IMR-90 (cell line): ENCODE measurements at regions of chr5 and their contacts with region 1.

Region 1: GRCh38 chr5:134527146-134527960 is 1.9 kb downstream of the JADE2 start:
- DNase-seq: peak; percentile 90
- ATAC-seq: peak; percentile 73
- H3K4me3 ChIP-seq: peak overlapping the region; percentile 62
- H3K27ac ChIP-seq: peak overlapping the region; percentile 93
- H3K4me1 ChIP-seq: peaks cover 31% of the 10 kb centered on the region
- H3K27me3 ChIP-seq: no peaks in the 10 kb centered on the region
- CTCF ChIP-seq: peak; percentile 86
- POLR2A ChIP-seq: peak; percentile 23; the same call in 1 of the 2 replicates
- RAD21 ChIP-seq: peak; percentile 68

Region 2: GRCh38 chr5:134411546-134412266 is 115.6 kb before region 1 on chr5 and contains the start of gene CDKN2AIPNL:
- CTCF ChIA-PET with region 1: interaction called, 5 read pairs
- POLR2A ChIA-PET with region 1: interaction called, 9 read pairs
- dilution Hi-C with region 1: no loop called
- in situ Hi-C with region 1: loop called (anchors 10 kb)
- intact Hi-C with region 1: loop called (anchors 1 kb)
- DNase-seq: peak; percentile 80
- ATAC-seq: peak; percentile 100
- H3K4me3 ChIP-seq: peak within 1 kb of the TSS; percentile 71
- H3K27ac ChIP-seq: peak within 1 kb of the TSS; percentile 87
- H3K4me1 ChIP-seq: peaks cover 8% of the 10 kb centered on the region
- H3K27me3 ChIP-seq: no peaks in the 10 kb centered on the region
- CTCF ChIP-seq: peak; percentile 90
- POLR2A ChIP-seq: peak; percentile 74
- RAD21 ChIP-seq: peak; percentile 63
- total RNA-seq, gene CDKN2AIPNL: 18.1 and 27.5 TPM in 2 replicates

Region 3: DNA sequence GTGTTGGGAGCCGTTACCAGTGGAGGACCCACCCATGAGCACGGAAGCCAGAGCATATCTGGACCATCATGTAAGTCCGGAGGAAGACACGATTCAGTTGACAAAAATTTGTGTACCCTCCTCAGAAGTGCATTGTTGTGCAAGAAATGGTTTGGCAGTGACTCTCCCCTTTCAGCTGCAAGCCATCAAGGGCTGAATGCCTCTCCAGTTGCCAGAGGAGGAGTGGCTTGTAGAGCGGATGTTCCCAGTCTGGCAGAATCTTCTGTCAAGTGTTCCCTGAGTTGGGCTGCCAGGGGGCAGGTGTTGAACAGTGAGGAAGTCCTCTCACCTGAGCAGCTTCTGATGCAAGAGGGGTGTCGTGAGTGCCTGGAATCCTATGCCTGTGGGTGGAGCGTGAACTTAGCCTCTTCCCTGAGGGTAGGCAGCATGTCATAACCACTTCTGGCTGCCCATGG is 88.1 kb before region 1 on chr5:
- CTCF ChIA-PET with region 1: no interaction called
- POLR2A ChIA-PET with region 1: no interaction called
- dilution Hi-C with region 1: no loop called
- in situ Hi-C with region 1: no loop called
- intact Hi-C with region 1: loop called (anchors 1 kb)
- DNase-seq: peak; percentile 98
- ATAC-seq: peak; percentile 64
- H3K4me3 ChIP-seq: no peak overlapping the region
- H3K27ac ChIP-seq: peak overlapping the region; percentile 88
- H3K4me1 ChIP-seq: peaks cover 31% of the 10 kb centered on the region
- H3K27me3 ChIP-seq: no peaks in the 10 kb centered on the region
- CTCF ChIP-seq: 0 out of 2 replicates have a peak, but pooled peaks have one; percentile 7
- POLR2A ChIP-seq: peak; percentile 26; the same call in 1 of the 2 replicates
- RAD21 ChIP-seq: peak; percentile 35

Region 4: DNA sequence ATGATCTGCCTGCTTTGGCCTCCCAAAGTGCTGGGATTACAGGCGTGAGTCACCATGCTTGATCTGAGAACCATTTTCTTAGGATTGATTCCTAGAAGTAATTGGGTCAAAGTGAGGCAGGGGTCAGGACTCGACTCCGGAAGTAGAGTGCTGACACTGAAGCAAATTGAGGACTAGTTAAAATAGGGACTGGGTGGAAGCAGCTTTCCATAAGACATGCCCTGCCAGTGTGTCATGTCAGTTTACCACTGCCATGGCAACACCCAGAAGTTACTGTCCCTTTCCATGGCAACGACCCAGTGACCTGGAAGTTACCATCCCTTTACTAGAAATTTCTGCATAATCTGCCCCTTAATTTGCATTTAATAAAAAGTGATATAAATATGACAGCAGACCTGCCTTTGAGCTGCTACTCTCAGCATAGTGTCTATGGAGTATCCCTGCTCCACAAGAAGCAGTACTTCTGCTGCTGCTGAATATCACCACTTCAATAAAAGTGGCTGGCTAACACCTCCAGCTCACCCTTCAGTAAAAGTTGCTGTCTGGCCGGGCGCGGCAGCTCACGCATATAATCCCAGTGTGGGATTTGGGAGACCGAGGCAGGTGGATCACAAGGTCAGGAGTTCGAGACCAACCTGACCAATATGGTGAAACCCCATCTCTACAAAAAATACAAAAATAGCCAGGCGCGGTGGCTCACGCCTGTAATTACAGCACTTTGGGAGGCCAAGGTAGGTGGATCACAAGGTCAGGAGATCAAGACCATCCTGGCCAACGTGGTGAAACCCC is 49.7 kb before region 1 on chr5:
- CTCF ChIA-PET with region 1: no interaction called
- POLR2A ChIA-PET with region 1: no interaction called
- dilution Hi-C with region 1: no loop called
- in situ Hi-C with region 1: no loop called
- intact Hi-C with region 1: no loop called
- DNase-seq: no peak
- ATAC-seq: no peak
- H3K4me3 ChIP-seq: no peak overlapping the region
- H3K27ac ChIP-seq: no peak overlapping the region
- H3K4me1 ChIP-seq: no peaks in the 10 kb centered on the region
- H3K27me3 ChIP-seq: no peaks in the 10 kb centered on the region
- CTCF ChIP-seq: no peak
- POLR2A ChIP-seq: no peak
- RAD21 ChIP-seq: no peak

Region 5: GRCh38 chr5:134547579-134547978 is 20.2 kb after region 1 on chr5:
- CTCF ChIA-PET with region 1: interaction called, 4 read pairs
- POLR2A ChIA-PET with region 1: interaction called, 3 read pairs
- dilution Hi-C with region 1: no loop called
- in situ Hi-C with region 1: no loop called
- intact Hi-C with region 1: loop called (anchors 1 kb)
- DNase-seq: peak; percentile 93
- ATAC-seq: peak; percentile 60
- H3K4me3 ChIP-seq: no peak overlapping the region
- H3K27ac ChIP-seq: peak overlapping the region; percentile 66
- H3K4me1 ChIP-seq: peaks cover 37% of the 10 kb centered on the region
- H3K27me3 ChIP-seq: no peaks in the 10 kb centered on the region
- CTCF ChIP-seq: no peak
- POLR2A ChIP-seq: no peak
- RAD21 ChIP-seq: no peak

Region 6: GRCh38 chr5:134577796-134578363 is 50.5 kb after region 1 on chr5:
- CTCF ChIA-PET with region 1: interaction called, 4 read pairs
- POLR2A ChIA-PET with region 1: interaction called, 3 read pairs
- dilution Hi-C with region 1: no loop called
- in situ Hi-C with region 1: no loop called
- intact Hi-C with region 1: loop called (anchors 1 kb)
- DNase-seq: peak; percentile 75
- ATAC-seq: peak; percentile 67
- H3K4me3 ChIP-seq: no peak overlapping the region
- H3K27ac ChIP-seq: no peak overlapping the region
- H3K4me1 ChIP-seq: peaks cover 8% of the 10 kb centered on the region
- H3K27me3 ChIP-seq: no peaks in the 10 kb centered on the region
- CTCF ChIP-seq: peak; percentile 91
- POLR2A ChIP-seq: 0 out of 2 replicates have a peak, but pooled peaks have one; percentile 26
- RAD21 ChIP-seq: peak; percentile 92